Prostate gland (tissue), 2 donors: ENCODE measurements at regions of chr7 and their contacts with region 1.

Region 1: DNA sequence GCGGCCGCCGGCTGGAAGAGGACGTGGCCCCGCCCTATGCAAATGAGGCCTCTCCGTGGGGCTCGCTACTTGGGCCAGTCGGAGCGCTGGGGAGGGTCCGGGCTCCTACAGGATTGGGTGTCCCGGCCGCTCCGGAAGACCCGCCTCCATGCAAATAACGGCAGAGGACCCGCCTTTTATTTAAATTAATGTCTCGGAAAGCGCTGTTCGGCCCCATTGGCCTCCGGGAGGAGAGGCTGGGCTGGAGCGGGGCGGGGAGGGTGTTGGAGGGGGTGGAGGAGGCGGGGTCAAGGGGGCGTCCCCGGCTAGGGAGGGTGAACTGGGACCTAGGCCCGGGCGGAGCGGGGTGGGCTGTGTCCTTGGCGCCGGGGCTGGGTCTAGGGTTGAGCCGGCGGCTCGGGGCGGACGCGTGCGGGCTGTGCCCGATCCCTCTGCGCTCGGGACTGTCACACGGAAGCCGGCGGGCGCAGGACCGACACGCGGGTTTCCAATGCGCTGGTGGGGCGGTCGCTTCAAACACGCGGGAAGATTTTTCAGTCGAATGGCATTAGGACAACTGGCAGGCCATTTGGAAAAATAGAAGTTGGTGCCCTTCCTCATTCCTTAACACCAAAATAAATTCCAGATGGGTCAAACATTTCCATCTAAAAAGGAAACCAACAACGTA is 344 bp upstream of the POLM start:
- DNase-seq: peak; percentile 99
- H3K4me3 ChIP-seq: peak overlapping the region; percentile 64 to 81
- H3K27ac ChIP-seq: peak overlapping the region; percentile 83 to 85
- H3K4me1 ChIP-seq: no peaks in the 10 kb centered on the region
- H3K27me3 ChIP-seq: no peaks in the 10 kb centered on the region
- CTCF ChIP-seq: peak in 2 of 4 experiments; percentile 5 to 6
- POLR2A ChIP-seq: peak; percentile 15

Region 2: GRCh38 chr7:44065436-44066118 is 17.1 kb before region 1 on chr7 and contains the start of gene PGAM2:
- intact Hi-C with region 1: no loop called
- DNase-seq: no peak
- H3K4me3 ChIP-seq: no peak within 1 kb of the TSS
- H3K27ac ChIP-seq: no peak within 1 kb of the TSS
- H3K4me1 ChIP-seq: no peaks in the 10 kb centered on the region
- H3K27me3 ChIP-seq: no peaks in the 10 kb centered on the region
- CTCF ChIP-seq: no peak
- POLR2A ChIP-seq: no peak
- total RNA-seq, gene PGAM2: 9.7 TPM in 1 of 2 donors, not detected in the other

Region 3: GRCh38 chr7:44123190-44124003 is 40.7 kb after region 1 on chr7 and contains the start of gene POLD2:
- intact Hi-C with region 1: loop called (anchors 5 kb)
- DNase-seq: peak; percentile 97
- H3K4me3 ChIP-seq: peak within 1 kb of the TSS; percentile 73 to 74
- H3K27ac ChIP-seq: peak within 1 kb of the TSS; percentile 69 to 74
- H3K4me1 ChIP-seq: peaks cover 7% of the 10 kb centered on the region
- H3K27me3 ChIP-seq: no peaks in the 10 kb centered on the region
- CTCF ChIP-seq: peak in 1 of 4 experiments; percentile 15
- POLR2A ChIP-seq: peak; percentile 52
- total RNA-seq, gene POLD2: 53.1 to 65.9 TPM

Region 4: DNA sequence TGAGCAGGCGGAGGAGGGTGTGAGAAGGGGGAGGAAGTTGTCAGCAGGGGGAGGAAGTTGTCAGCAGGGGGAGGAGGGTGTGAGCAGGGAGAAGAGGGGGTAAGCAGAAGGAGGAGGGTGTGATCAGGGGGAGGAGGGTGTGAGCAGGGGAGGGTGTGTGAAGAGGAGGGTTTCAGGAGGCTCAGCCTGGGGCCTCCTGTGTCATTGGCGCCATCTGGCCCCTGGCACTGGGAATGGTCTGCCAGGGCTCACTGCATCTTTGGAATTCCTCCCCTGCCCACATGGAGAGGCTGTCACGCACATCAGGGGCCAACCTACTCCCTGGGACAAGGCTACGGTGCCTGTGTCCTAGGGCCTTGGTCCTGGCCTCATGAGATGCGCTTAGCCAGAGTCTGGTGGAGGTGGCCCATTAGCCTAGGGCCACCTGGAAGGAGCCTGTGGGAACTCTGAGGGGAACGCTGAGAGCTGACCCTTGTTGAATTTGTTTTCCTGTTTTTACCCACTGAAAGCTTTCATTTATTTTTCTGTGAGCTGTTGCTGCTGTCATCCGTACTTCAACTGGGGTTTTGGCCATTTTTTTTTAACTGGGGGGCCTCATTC is 224.7 kb after region 1 on chr7:
- intact Hi-C with region 1: no loop called
- DNase-seq: no peak
- H3K4me3 ChIP-seq: no peak overlapping the region
- H3K27ac ChIP-seq: no peak overlapping the region
- H3K4me1 ChIP-seq: no peaks in the 10 kb centered on the region
- H3K27me3 ChIP-seq: no peaks in the 10 kb centered on the region
- CTCF ChIP-seq: no peak
- POLR2A ChIP-seq: no peak

Region 5: DNA sequence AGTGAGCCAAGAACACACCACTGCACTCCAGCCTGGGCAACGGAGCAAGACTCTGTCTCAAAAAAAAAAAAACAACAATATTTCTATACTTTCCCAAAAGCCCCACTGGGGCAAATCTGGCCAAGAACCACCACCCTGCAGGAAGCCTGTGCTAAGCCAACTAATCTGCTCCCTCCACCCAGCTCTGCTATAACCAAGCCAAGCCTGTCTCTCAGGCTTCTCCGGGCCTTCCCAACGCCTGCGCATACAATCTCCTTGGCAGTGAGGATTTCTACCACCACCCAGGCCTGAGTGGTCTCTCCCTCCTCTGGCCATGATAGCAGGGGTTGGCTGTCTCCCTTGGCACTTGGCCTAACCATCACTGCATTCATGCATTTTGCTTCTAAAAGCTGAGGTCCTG is 476.8 kb after region 1 on chr7:
- intact Hi-C with region 1: no loop called
- DNase-seq: no peak
- H3K4me3 ChIP-seq: no peak overlapping the region
- H3K27ac ChIP-seq: no peak overlapping the region
- H3K4me1 ChIP-seq: no peaks in the 10 kb centered on the region
- H3K27me3 ChIP-seq: no peaks in the 10 kb centered on the region
- CTCF ChIP-seq: no peak
- POLR2A ChIP-seq: no peak